Upper lobe of right lung (tissue), 1 donor: ENCODE measurements at regions of chr11 and their contacts with region 1.

Region 1: DNA sequence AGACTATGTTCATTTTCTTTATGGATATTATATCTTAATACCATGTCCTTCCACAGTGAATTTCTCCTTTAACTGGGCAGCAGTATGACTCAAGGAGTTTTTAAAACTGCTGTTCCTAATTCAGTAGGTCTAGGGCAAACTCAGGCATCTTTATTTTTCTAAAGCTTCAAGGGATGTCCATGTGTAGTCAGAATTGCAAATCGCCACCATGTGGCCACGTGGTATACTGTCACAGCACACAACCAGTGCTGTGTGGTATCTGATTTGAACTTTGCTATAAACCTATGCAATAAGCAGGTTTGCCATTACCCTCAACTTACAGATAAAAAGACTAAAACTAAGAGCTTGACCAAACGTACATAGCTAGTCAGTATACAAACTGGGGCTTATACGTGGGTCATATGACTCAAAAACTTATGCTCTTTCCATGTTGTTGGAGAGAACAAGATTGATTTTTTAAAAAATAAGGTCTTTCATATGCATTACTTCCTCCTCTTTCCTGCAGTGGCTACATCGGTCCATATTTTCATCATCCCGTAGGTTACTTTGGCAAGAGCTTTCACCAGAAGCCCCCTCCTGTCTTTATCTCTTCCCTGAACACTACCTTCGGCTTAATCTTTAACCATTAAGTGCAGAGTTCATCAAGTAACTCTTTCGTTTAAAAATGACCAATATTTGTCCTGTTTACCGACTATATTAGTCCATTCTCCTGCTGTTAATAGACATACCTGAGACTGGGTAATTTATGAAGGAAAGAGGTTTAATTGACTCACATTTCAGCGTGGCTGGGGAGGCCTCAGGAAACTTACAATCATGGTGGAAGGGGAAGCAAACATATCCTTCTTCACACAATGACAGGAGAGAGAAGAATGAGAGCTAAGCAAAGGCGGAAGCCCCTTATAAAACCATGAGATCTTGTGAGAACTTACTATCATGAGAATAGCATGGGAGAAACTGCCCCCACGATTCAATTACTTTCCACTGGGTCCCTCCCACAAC is 8.0 kb upstream of the HTATIP2 start:
- DNase-seq: no peak
- ATAC-seq: peak; percentile 73
- H3K4me3 ChIP-seq: no peak overlapping the region
- H3K27ac ChIP-seq: no peak overlapping the region
- H3K4me1 ChIP-seq: no peaks in the 10 kb centered on the region
- H3K27me3 ChIP-seq: no peaks in the 10 kb centered on the region
- CTCF ChIP-seq: peak; percentile 60

Region 2: GRCh38 chr11:20110908-20111669 is 244.4 kb before region 1 on chr11:
- intact Hi-C with region 1: no loop called
- DNase-seq: no peak
- ATAC-seq: peak; percentile 87
- H3K4me3 ChIP-seq: no peak overlapping the region
- H3K27ac ChIP-seq: no peak overlapping the region
- H3K4me1 ChIP-seq: peaks cover 10% of the 10 kb centered on the region
- H3K27me3 ChIP-seq: no peaks in the 10 kb centered on the region
- CTCF ChIP-seq: peak; percentile 79

Region 3: DNA sequence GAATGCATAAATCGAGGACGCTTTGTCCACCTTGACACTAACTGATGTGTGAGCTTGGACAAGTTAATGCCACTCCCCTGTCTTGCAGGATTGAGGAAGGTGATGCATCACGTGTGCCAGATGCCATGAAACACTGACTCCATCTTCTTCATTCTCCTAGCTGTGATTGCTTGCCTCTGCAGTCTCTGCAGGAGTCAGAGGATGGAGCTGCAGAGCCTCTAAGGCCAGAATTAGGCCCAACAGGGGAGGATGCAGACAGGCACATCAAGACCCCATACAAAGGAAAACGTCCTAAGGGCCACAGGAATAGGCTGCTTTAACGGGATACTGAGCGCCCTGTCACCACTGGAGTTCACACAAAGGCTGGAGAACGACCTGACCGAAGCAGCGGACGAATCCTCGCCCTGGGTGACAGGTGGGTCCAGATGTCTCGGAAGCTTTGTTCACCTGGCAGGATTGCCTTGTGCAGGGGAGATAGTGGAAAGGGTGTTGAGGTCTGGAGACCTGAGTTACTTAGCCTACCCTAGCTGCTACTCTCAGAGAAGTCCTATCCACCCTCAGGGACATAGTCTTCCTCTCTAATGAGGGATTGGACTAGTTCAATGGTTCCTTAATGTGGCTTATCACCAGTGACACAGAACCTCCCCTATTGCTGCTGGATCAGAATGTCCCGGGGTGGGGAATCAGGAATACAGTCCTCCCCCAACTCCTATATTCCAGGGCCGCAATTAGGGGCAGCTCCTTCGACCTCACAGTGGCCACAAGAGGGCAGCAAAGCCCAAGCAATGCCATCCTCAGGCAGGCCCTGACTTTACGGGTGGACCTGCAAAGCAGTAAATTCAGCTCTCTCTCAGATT is 227.6 kb before region 1 on chr11:
- intact Hi-C with region 1: loop called (anchors 10 kb)
- DNase-seq: peak; percentile 83
- ATAC-seq: peak; percentile 86
- H3K4me3 ChIP-seq: no peak overlapping the region
- H3K27ac ChIP-seq: no peak overlapping the region
- H3K4me1 ChIP-seq: peaks cover 6% of the 10 kb centered on the region
- H3K27me3 ChIP-seq: peaks cover 6% of the 10 kb centered on the region
- CTCF ChIP-seq: peak; percentile 85

Region 4: GRCh38 chr11:20501252-20501651 is 145.7 kb after region 1 on chr11:
- intact Hi-C with region 1: no loop called
- DNase-seq: no peak
- ATAC-seq: peak; percentile 41
- H3K4me3 ChIP-seq: no peak overlapping the region
- H3K27ac ChIP-seq: no peak overlapping the region
- H3K4me1 ChIP-seq: no peaks in the 10 kb centered on the region
- H3K27me3 ChIP-seq: no peaks in the 10 kb centered on the region
- CTCF ChIP-seq: no peak